ENCODE measurements at regions of chr5 and their contacts with region 1.

Region 1: DNA sequence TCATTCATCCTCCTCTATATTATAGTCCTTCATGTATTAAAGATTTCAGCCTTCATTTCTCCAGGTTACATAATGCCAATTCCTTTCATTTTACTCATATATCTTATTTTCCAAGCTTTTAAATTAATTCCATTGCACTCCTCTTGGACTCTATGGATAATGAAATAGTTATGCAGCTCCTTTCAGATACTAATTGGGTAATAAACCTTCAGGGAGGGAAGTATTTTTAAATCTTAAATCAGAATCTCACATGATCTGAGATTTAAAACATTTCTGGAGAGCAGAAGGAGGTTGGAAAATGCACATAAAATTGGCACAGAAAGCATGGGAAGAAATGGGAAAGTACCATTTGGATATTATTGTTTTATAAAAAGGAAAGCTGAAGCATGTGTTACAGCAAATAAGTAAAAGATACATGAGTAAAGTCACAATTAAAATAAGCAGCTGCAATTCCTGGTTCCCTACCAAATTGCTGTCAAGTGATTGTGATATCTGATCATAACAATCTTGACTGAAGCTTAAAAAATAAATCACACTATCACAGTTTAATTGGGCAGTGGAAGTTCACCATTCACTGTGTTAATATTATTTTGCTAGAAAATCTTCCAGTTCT is 257.9 kb upstream of the NREP start:
- DNase-seq: no peak
- ATAC-seq: no peak
- H3K4me3 ChIP-seq: no peak overlapping the region
- H3K27ac ChIP-seq: no peak overlapping the region
- H3K4me1 ChIP-seq: no peaks in the 10 kb centered on the region
- H3K27me3 ChIP-seq: no peaks in the 10 kb centered on the region
- CTCF ChIP-seq: no peak
- POLR2A ChIP-seq: no peak
- RAD21 ChIP-seq: no peak

Region 2: DNA sequence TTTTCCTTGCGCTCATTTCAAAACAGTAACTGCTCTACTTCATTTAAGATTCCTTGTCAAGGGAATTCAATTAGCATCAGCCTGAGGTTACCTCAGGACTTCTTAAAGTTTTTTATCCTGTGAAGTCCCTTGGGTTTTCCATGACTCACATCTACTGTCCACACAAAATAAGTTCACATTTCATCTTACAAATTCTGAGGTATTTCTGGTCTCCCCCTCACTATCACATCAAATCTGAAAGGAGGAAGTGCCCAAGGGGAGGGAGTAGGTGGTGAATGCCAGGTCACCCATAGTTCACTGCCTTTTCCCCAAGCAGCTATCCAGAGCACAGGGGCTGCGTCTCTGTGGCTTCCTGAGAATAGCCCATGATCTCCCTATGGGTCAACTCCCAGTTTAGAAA is 30.8 kb before region 1 on chr5:
- CTCF ChIA-PET with region 1: no interaction called
- POLR2A ChIA-PET with region 1: no interaction called
- RAD21 ChIA-PET with region 1: no interaction called
- intact Hi-C with region 1: loop called (anchors 5 kb)
- DNase-seq: no peak
- ATAC-seq: no peak
- H3K4me3 ChIP-seq: no peak overlapping the region
- H3K27ac ChIP-seq: no peak overlapping the region
- H3K4me1 ChIP-seq: peaks cover 0 to 6% of the 10 kb centered on the region in 2 experiments; a peak in 2 of 4 replicates
- H3K27me3 ChIP-seq: no peaks in the 10 kb centered on the region
- CTCF ChIP-seq: no peak
- POLR2A ChIP-seq: no peak
- RAD21 ChIP-seq: no peak